ENCODE measurements at regions of chr12 and their contacts with region 1.

Region 1: DNA sequence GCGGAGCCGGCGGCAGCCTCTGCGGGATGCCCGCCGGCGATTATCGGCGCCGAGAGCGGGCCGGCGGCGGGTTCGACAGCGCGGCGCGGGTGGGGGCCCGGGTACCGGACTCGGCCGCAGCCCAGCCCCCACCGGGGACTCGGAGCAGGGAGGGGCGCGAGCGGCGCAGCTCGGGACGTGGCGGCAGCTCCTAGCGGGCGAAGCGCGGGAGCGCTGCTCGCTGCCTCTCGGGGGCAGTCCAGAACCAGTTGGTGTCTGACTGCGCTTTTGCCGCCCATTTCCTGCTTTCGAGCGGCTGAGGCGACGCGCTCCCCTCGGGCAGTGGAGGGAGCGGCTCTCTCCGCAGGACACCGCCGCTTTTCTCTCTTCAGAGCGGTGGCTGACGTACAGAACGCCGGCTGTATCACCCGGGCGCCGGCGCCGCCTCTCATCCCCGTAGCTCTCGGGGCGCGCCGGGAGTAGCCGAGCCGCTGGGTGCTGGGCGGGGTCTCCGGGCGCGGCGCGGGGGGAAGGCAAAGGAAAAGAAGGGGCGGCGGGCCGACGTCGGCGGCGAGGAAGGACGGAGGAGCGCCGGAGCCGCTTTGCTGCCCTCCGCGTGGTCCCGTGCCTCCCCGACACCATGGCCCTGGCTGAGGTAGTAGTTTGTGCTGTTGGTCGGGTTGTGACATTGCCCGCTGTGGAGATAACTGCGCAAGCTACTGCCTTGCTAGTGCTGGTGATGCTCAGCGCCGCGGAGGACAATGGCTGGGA is 136.6 kb downstream of the MON2 start:
- DNase-seq: peak; percentile 90
- H3K4me3 ChIP-seq: peak overlapping the region; percentile 92 to 99 (median 99)
- H3K27ac ChIP-seq: peak overlapping the region; percentile 97
- H3K4me1 ChIP-seq: peaks cover 22% of the 10 kb centered on the region
- H3K27me3 ChIP-seq: no peaks in the 10 kb centered on the region
- CTCF ChIP-seq: peak; percentile 29 to 75
- POLR2A ChIP-seq: peak; percentile 55

Region 2: GRCh38 chr12:62259993-62260732 is 343.1 kb before region 1 on chr12 and contains the start of gene USP15:
- CTCF ChIA-PET with region 1: no interaction called
- POLR2A ChIA-PET with region 1: no interaction called
- dilution Hi-C with region 1: no loop called
- intact Hi-C with region 1: loop called (anchors 2 kb)
- DNase-seq: peak; percentile 97
- H3K4me3 ChIP-seq: peak within 1 kb of the TSS; percentile 65 to 97 (median 93)
- H3K27ac ChIP-seq: peak within 1 kb of the TSS; percentile 71
- H3K4me1 ChIP-seq: peaks cover 19% of the 10 kb centered on the region
- H3K27me3 ChIP-seq: no peaks in the 10 kb centered on the region
- CTCF ChIP-seq: peak; percentile 84 to 96
- POLR2A ChIP-seq: peak; percentile 78
- total RNA-seq, gene USP15: 61.8 and 66.2 TPM in 2 replicates

Region 3: DNA sequence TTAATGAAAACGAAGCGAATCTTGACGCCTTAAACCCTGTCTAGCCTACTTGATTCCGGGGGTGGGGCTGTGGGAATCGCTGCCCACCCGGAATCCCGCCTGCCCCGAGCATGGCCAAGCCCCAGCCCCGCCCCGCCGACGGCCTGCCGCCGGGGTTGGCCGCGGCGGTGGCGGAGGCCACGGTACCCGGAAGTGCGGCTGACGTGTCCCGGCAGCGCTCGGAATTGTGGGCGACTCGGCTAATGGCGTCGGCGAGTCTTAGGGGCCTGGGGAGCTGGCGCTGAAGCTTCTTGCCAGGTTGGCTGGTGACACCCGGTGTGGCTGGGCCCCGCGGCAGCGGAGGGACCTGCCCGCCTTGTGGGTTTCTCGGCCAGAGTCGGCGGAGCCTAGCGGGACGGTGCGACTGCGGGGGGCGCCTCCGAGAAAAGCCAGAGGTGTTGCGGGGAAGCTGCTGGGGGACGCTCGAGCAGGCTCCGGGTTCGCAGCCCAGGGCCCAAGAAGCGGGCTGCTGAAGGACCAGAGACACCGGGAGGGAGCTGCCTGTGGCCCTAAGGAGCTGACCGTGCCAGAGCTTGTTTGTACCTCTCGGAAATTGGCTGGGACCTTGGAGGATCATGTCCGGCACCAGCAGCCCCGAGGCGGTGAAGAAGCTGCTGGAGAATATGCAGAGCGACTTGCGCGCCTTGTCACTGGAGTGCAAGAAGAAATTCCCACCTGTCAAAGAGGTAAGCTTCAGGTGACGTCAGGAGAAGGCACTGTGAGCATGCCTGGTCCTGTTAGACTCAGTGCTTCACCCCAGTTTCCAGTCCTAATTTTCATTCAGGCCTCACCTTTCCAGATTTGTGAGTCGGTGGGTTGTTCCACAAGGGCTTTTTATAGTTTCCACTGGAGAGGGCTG is 136.4 kb before region 1 on chr12 and contains the start of gene MON2:
- CTCF ChIA-PET with region 1: no interaction called
- POLR2A ChIA-PET with region 1: no interaction called
- dilution Hi-C with region 1: no loop called
- intact Hi-C with region 1: loop called (anchors 5 kb)
- DNase-seq: peak; percentile 89
- H3K4me3 ChIP-seq: peak within 1 kb of the TSS; percentile 83 to 90 (median 88)
- H3K27ac ChIP-seq: peak within 1 kb of the TSS; percentile 92
- H3K4me1 ChIP-seq: peaks cover 9% of the 10 kb centered on the region
- H3K27me3 ChIP-seq: peaks cover 0 to 2% of the 10 kb centered on the region in 2 experiments
- CTCF ChIP-seq: no peak
- POLR2A ChIP-seq: peak; percentile 92
- total RNA-seq, gene MON2: 41.8 and 43.0 TPM in 2 replicates

Region 4: GRCh38 chr12:62618930-62619329 is 15.7 kb after region 1 on chr12:
- CTCF ChIA-PET with region 1: interaction called, 13 read pairs
- POLR2A ChIA-PET with region 1: interaction called, 7 read pairs
- dilution Hi-C with region 1: no loop called
- intact Hi-C with region 1: no loop called
- DNase-seq: peak; percentile 48
- H3K4me3 ChIP-seq: no peak overlapping the region
- H3K27ac ChIP-seq: no peak overlapping the region
- H3K4me1 ChIP-seq: peaks cover 12% of the 10 kb centered on the region
- H3K27me3 ChIP-seq: no peaks in the 10 kb centered on the region
- CTCF ChIP-seq: no peak
- POLR2A ChIP-seq: no peak

Region 5: GRCh38 chr12:62660756-62661155 is 57.5 kb after region 1 on chr12:
- CTCF ChIA-PET with region 1: no interaction called
- POLR2A ChIA-PET with region 1: no interaction called
- dilution Hi-C with region 1: no loop called
- intact Hi-C with region 1: loop called (anchors 1 kb)
- DNase-seq: peak; percentile 84
- H3K4me3 ChIP-seq: no peak overlapping the region
- H3K27ac ChIP-seq: peak overlapping the region; percentile 55
- H3K4me1 ChIP-seq: peaks cover 27% of the 10 kb centered on the region
- H3K27me3 ChIP-seq: no peaks in the 10 kb centered on the region
- CTCF ChIP-seq: no peak
- POLR2A ChIP-seq: no peak

Region 6: GRCh38 chr12:62785941-62786559 is 182.8 kb after region 1 on chr12:
- CTCF ChIA-PET with region 1: interaction called, 39 read pairs
- POLR2A ChIA-PET with region 1: interaction called, 20 read pairs
- dilution Hi-C with region 1: loop called (anchors 25 kb)
- intact Hi-C with region 1: loop called (anchors 1 kb)
- DNase-seq: peak; percentile 97
- H3K4me3 ChIP-seq: peak overlapping the region in 1 of 3 experiments; percentile 17
- H3K27ac ChIP-seq: peak overlapping the region; percentile 99
- H3K4me1 ChIP-seq: peaks cover 62% of the 10 kb centered on the region
- H3K27me3 ChIP-seq: no peaks in the 10 kb centered on the region
- CTCF ChIP-seq: no peak
- POLR2A ChIP-seq: peak; percentile 91

Region 7: DNA sequence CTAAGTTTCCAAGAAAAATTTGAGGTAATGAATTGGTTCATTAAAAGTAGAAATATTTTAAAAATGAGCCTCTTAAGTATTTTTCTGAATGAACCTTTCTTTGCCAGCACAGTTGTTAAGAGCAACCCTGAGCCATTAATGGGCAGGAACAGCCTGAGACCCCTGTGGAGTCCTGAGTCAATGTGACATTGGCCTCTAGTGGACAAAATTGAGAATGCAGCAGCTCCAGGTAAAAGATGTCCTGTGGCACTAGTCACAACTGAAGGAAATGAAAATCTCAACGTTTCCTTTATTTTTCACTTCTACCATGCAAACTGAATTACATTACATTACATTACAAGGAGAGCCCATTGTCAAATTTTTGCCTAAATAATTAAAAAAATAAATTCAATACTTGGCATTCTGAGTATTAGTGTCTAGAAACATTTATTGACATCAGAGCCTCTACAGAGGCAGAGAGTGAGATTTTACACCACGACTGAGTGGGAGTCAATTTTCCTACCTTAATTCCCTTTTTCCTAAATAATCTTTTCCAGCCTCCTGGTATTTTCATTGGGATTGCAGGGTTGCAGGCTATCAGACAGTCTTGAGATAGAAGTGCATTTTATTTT is 196.0 kb after region 1 on chr12:
- CTCF ChIA-PET with region 1: interaction called, 79 read pairs
- POLR2A ChIA-PET with region 1: interaction called, 7 read pairs
- dilution Hi-C with region 1: loop called (anchors 25 kb)
- intact Hi-C with region 1: loop called (anchors 1 kb)
- DNase-seq: peak; percentile 73
- H3K4me3 ChIP-seq: no peak overlapping the region
- H3K27ac ChIP-seq: no peak overlapping the region
- H3K4me1 ChIP-seq: no peaks in the 10 kb centered on the region
- H3K27me3 ChIP-seq: no peaks in the 10 kb centered on the region
- CTCF ChIP-seq: peak; percentile 88 to 91
- POLR2A ChIP-seq: no peak

Region 8: GRCh38 chr12:62986844-62987243 is 383.6 kb after region 1 on chr12:
- CTCF ChIA-PET with region 1: no interaction called
- POLR2A ChIA-PET with region 1: no interaction called
- dilution Hi-C with region 1: no loop called
- intact Hi-C with region 1: no loop called
- DNase-seq: no peak
- H3K4me3 ChIP-seq: no peak overlapping the region
- H3K27ac ChIP-seq: no peak overlapping the region
- H3K4me1 ChIP-seq: no peaks in the 10 kb centered on the region
- H3K27me3 ChIP-seq: peaks cover 0 to 2% of the 10 kb centered on the region in 2 experiments
- CTCF ChIP-seq: no peak
- POLR2A ChIP-seq: no peak

Measured in endothelial cell of umbilical vein (primary cell).